Breast epithelium (tissue), 4 donors: ENCODE measurements at regions of chr14 and their contacts with region 1.

Region 1: DNA sequence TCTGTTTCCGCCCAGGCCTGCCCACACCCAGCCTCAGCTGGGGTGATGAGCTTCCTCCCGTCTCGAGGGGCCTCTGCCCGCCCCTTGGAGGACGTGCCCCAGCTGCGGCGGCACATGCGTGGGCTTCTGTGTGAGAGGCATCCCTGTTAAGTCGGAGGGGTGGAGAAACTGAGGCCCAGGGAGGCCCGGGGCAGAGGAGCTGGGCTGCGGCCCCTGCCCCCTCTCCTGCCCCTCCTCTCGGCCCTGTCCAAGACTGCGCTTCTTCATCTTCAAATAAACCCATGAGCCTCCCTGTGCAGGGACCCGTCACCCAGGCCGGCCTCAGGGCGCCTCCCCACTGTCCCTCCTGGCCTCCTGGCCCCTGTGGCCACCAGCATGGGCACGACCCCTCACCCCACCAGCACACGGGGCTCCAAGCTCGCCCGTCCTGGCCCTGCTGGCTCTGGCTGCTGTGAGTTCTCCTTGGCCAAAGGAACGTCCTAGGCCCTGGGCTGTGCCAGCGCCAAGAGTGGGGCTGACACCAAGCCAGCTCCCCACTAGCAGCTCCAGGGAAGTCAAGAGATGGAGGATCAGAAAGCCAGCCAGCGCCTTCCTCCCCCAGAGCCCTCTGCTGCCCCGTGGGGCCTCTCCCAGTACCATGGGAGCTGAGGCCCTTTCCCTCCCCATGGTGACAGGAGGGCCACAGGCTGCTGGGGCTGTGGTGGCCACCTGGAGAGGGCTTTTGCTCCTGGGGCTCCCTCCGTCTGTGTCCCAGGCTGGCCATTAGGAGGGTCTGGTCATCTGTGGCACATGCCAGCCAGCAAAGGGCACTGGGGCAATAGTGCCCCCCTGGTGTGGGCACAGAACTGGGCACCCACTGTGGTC is 180.4 kb downstream of the KIF26A start:
- DNase-seq: peak in 1 of 2 donors; percentile 44
- H3K4me3 ChIP-seq: no peak overlapping the region
- H3K27ac ChIP-seq: no peak overlapping the region
- H3K4me1 ChIP-seq: no peaks in the 10 kb centered on the region
- H3K27me3 ChIP-seq: peaks cover 0 to 65% of the 10 kb centered on the region in 2 donors
- CTCF ChIP-seq: no peak
- POLR2A ChIP-seq: no peak

Region 2: DNA sequence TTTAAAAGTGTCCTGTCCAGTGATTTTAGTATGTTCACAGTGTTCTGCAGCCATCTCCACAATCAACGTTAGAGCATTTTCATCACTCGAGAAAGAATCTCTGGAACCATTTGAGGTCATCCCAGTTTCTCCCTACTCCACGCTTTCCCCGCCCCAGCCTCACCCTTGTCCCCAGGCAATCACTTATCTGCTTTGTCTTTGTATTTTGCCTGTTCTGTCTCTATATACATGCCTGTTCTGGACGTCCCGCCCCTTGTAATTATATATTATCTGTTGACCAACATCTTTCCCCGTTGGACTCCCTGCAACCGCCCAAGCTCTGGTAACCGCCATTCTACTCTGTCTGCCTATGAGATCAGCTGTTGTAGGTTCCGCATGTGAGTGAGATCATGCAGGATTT is 254.8 kb before region 1 on chr14:
- intact Hi-C with region 1: no loop called
- DNase-seq: no peak
- H3K4me3 ChIP-seq: no peak overlapping the region
- H3K27ac ChIP-seq: no peak overlapping the region
- H3K4me1 ChIP-seq: no peaks in the 10 kb centered on the region
- H3K27me3 ChIP-seq: peaks cover 0 to 7% of the 10 kb centered on the region in 2 donors
- CTCF ChIP-seq: no peak
- POLR2A ChIP-seq: no peak

Region 3: GRCh38 chr14:105224845-105225570 is 906.2 kb after region 1 on chr14:
- intact Hi-C with region 1: loop called (anchors 5 kb)
- DNase-seq: no peak
- H3K4me3 ChIP-seq: no peak overlapping the region
- H3K27ac ChIP-seq: no peak overlapping the region
- H3K4me1 ChIP-seq: no peaks in the 10 kb centered on the region
- H3K27me3 ChIP-seq: no peaks in the 10 kb centered on the region
- CTCF ChIP-seq: no peak
- POLR2A ChIP-seq: no peak